Cardiac septum (tissue), 1 donor: ENCODE measurements at regions of chr1 and their contacts with region 1.

Region 1: DNA sequence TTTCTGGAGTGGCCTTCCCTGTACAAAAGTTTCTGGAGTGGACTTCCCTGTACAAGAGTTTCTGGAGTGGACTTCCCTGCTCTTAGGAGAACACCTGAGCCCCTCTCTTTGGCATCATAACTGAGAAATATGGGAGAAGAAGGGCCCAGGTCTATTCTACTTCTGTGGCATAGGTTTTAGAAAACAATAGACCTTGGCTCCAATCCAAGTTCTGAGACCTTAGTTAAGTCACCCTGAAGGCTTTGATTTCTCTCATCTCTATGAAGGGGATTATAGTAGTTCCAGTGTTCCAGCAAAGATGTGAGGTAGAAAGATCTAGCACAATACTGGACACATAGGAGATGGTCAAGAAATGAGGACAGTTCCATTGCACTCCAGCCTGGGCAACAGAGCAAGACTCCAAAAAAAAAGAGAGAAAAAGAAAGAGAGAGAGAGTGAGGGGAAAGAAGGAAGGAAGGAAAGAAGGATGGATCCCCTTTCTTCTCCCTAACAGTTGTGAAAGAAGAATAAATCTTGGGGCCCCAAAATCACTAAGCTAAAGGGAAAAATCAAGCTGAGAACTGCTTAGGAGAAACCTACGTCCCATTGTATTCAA is 13.3 kb upstream of the EIF4G3 start:
- DNase-seq: no peak

Region 2: GRCh38 chr1:21077085-21077484 is 112.9 kb before region 1 on chr1:
- intact Hi-C with region 1: loop called (anchors 10 kb)
- DNase-seq: no peak

Region 3: DNA sequence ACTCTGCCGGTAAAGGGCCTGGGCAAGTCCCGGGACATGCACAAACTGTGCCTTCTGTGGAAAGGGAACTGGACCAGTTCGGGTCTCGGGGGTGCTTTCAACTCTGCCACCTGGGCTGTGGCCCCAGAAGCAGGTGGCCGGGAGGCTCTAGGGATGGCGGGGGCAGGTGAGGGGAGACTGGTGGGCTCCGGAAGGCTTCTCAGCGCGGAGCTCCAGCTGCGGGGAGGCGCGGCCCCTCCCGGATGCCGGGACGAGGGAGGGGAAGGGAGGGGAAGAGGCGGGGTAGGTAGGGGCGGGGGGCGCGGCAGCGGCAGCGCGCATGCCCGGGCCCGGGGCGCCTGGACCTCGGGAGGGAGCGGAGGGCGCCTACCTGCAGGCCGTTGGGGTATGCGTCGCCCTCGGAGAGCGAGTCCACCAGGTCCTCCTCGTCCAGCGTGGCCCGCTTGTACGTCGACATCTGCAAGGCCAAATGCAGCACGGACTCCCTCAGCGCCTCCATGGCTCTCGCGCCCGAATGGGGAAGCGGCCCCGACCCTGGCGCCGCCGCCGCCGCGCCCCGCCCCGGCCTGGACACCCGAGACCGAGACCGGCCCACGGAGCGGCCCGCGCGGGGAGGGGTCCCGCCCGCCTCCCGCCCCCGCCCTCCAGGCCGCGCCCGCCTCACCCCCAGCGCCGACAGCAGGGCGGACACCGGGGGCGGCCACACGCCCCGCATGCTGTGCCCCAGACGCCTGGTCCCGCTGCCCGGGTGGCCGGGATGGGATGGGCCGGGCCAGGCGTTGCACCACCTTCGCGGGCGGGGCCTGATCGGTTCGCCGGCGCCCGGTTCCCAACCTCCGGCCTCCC is 99.9 kb after region 1 on chr1 and contains the start of gene ECE1:
- intact Hi-C with region 1: no loop called
- DNase-seq: peak; percentile 84
- total RNA-seq, gene ECE1: 55.8 TPM

Region 4: GRCh38 chr1:21414015-21414414 is 224.0 kb after region 1 on chr1:
- intact Hi-C with region 1: no loop called
- DNase-seq: no peak